HepG2 (cell line): ENCODE measurements at regions of chrX and their contacts with region 1.

Region 1: DNA sequence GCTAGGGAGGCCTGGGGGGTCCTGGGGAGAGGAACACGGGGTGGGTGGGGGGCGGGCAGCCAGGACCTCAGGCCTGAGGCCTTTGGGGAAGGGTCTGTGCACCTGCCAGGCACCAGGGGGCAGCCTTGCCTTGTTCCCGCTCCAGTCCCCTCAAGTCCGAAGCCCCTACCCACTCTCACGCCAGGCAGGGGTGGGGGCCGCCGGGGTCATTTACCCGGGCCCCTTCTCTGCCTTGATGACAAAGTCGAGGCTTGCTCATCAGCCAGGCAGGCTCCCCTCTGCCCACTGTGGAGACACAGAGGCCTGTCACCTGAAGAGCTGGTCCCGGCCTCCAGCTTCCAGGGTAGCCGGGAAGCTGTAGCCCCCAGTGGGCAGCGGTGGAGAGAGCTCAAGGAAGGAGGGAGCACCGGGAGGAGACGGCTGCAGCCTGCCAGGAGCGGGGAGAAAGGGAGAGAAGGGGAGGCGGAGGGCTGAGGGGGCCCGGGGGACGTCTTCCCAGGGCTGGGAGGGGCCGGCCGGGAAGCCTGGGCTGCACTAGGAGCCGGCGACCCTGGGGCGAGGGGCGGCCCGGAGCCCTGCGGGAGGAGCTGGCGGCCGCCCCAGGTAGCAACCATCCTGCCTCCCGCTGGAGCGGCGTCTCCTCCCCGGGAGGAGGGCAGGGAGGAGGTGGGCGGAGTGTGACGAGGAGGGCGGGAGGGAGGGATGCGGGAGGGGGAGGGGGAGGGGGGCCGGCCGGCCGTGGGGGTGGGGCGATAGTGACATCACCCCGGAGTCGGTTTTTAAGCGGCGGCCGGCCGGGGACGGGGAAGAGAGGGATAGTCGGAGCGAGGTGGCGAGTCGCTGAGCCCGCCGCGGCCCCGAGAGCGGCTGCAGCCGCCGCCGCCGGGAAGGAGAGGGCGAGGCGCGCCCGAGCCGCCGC is at the start of gene SLC6A8:
- DNase-seq: peak; percentile 31
- ATAC-seq: peak; percentile 38
- H3K4me3 ChIP-seq: peak within 1 kb of the TSS; percentile 42 to 74 (median 68); a peak in 5 of 6 replicates
- H3K27ac ChIP-seq: peak within 1 kb of the TSS; percentile 76
- H3K4me1 ChIP-seq: peaks cover 34% of the 10 kb centered on the region
- H3K27me3 ChIP-seq: no peaks in the 10 kb centered on the region
- CTCF ChIP-seq: peak; percentile 57
- EP300 ChIP-seq: no peak
- POLR2A ChIP-seq: peak in 1 of 2 experiments; percentile 50; a peak in 1 of 4 replicates
- RAD21 ChIP-seq: no peak
- total RNA-seq, gene SLC6A8: 9.0 and 13.9 TPM in 2 replicates

Region 2: DNA sequence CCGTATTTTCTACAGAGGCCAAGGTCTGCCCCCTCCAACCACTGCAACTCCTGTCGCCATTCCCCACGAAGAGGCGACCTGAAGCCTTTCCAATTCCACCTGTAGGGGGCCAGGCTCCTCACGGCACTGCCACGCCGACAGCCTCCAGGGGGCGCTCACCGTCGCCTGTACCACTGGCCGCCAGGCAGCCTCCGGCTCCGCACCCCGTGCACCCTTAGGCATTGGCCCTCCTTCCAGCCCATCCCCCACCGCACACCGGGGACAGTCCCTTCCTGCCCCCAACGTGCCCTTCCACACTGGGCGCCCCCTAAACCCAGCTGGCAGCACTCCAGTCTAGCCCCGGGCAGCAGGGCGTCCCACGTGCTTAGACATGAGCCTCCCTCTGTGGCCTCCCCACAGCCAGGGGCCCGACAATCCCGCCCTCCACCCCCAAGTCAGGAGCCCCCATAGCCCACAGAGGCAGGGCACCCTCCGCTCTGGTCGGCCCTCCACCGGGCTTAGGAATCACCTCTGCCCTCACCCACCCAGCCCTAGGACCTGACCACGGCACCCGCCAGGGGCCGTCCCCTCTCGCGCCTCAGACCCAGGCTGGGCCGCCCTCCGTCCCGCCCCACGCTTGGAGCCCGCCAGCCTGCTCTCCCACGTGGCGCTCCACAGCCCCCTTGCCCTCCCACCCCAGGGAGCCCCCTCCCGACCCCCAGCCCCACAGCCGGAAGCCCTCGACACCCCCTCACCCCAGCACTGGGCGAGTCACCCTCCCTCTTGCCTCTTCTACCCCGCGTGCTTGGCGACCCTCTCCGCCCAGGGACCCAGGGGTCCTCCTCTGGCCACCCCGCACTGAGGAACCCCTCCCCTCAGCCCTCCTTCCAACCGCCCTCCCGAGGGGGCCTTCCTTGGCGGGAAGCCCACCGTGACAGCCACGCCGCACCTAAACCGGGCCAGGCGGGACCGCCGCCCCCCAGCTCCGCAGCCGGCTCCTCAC is 286.9 kb before region 1 on chrX:
- CTCF ChIA-PET with region 1: no interaction called
- POLR2A ChIA-PET with region 1: no interaction called
- in situ Hi-C with region 1: no loop called
- intact Hi-C with region 1: no loop called
- DNase-seq: peak; percentile 29
- ATAC-seq: peak; percentile 88
- H3K4me3 ChIP-seq: no peak overlapping the region
- H3K27ac ChIP-seq: no peak overlapping the region
- H3K4me1 ChIP-seq: no peaks in the 10 kb centered on the region
- H3K27me3 ChIP-seq: no peaks in the 10 kb centered on the region; a peak in 1 of 5 replicates
- CTCF ChIP-seq: peak; percentile 92
- EP300 ChIP-seq: no peak
- POLR2A ChIP-seq: no peak
- RAD21 ChIP-seq: peak; percentile 82

Region 3: DNA sequence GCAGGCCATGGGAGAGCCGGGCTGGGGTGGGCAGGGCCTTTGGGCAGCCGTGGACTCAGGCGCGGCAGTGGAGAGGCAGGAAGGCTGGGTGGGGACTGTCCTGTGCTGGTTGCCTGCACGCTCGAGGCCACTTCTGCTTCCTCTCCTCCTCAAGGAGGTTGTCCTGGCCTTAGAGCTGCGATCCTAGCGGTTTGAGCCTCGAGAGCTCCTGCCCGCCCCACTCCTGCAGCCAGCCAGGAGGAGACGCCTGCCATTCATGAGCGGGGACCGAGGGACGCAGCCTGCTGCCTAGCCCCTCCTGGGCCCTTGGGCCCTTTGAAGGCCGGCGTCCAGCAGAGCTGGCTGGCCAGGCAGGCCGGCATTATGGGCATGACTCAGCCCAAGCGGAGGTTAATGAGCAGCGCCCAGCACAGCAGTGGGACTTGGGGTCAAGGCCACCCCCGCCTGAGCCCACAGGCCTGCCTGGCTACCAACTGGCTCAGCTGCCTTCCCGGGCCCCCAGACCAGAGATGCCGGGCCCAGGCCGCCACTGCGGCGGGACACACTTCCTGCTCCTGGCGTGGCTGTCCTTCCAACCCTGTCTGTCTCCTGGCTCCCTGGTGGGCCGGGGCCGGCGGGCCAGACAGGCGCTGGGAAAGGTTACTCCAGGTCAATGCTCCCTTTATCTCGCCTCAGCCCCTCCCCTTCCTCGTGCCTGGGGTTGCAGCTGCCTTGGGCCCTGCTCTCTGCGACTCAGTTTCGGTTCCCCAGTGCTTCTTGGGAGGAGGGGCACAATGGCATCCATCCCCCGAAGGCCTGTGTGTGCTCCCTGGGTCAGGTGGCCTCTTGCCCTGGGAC is 39.1 kb after region 1 on chrX:
- CTCF ChIA-PET with region 1: no interaction called
- POLR2A ChIA-PET with region 1: interaction called, 16 read pairs
- in situ Hi-C with region 1: no loop called
- intact Hi-C with region 1: no loop called
- DNase-seq: peak; percentile 75
- ATAC-seq: peak; percentile 62
- H3K4me3 ChIP-seq: peak overlapping the region; percentile 60 to 79 (median 79); a peak in 5 of 6 replicates
- H3K27ac ChIP-seq: peak overlapping the region; percentile 92
- H3K4me1 ChIP-seq: peaks cover 51% of the 10 kb centered on the region
- H3K27me3 ChIP-seq: no peaks in the 10 kb centered on the region
- CTCF ChIP-seq: peak; percentile 9; the same call in 1 of the 2 replicates
- EP300 ChIP-seq: no peak
- POLR2A ChIP-seq: peak in 1 of 2 experiments; percentile 86; a peak in 2 of 4 replicates
- RAD21 ChIP-seq: 0 out of 2 replicates have a peak, but pooled peaks have one; percentile 44

Region 4: DNA sequence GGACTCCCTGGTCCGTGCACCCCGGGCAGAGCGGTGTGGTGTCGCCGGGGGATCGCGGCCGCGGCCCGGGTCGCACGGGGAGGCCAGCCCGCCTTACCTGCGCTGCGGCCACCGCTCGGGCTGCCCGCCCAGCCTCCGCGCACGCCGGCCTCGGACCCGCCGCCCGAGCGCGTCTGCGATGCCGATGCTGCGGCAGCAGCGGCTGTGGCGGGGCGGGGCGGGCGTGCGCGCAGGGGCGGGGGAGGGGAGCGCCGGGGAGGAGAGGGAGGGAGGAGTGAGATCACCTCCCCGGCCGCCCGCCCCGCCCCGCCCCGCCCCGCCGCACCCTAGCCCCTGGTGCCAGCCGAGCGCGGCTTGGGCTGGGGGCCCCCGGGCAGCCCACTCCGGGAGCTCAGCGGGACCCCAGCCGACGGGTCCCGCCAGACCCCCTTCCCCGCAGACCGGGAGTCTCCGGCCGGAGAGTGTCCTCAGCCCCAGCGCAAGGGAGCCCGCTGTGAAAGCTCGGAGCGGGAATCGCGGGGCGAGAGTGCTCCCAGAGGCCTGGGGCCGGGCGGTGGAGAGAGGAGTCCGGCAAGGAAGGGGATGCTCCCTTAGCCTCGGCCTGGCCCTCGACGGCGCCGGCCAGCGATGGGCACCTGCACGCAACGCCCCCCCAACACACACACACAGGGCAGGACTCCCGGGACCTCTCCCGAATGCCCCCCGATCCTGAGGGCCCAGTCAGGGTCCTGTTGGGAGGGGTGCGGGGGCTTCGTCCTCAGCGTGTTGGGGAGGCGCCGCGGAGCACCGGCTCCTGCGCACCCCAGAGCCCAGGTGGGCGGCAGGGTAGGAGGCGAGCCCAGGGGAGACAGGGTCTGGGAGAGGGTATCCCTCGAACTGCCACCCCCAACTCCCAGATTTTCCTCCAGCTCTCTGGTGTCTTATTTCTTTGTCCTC is 198.9 kb after region 1 on chrX and contains the start of gene L1CAM:
- CTCF ChIA-PET with region 1: no interaction called
- POLR2A ChIA-PET with region 1: no interaction called
- in situ Hi-C with region 1: no loop called
- intact Hi-C with region 1: no loop called
- DNase-seq: no peak
- ATAC-seq: no peak; the same call in 2 of the 3 replicates
- H3K4me3 ChIP-seq: peak within 1 kb of the TSS in 2 of 3 experiments; percentile 33 to 55; a peak in 3 of 6 replicates
- H3K27ac ChIP-seq: no peak within 1 kb of the TSS
- H3K4me1 ChIP-seq: peaks cover 19% of the 10 kb centered on the region
- H3K27me3 ChIP-seq: peaks cover 0 to 19% of the 10 kb centered on the region in 2 experiments; a peak in 3 of 5 replicates
- CTCF ChIP-seq: no peak
- EP300 ChIP-seq: no peak
- POLR2A ChIP-seq: no peak
- RAD21 ChIP-seq: no peak
- total RNA-seq, gene L1CAM: 1.1 and 1.4 TPM in 2 replicates